ENCODE measurements at regions of chr9 and their contacts with region 1.

Region 1: GRCh38 chr9:75855509-75855908 is 35.0 kb upstream of the PCSK5 start:
- DNase-seq: peak in 1 of 2 donors; percentile 17
- ATAC-seq: peak in 4 of 8 donors; percentile 34 to 65 (median 50)
- H3K4me3 ChIP-seq: no peak overlapping the region
- H3K27ac ChIP-seq: no peak overlapping the region
- H3K4me1 ChIP-seq: peaks cover 0 to 7% (median 0%) of the 10 kb centered on the region in 9 donors
- H3K27me3 ChIP-seq: no peaks in the 10 kb centered on the region
- CTCF ChIP-seq: peak; percentile 31 to 75 (median 60)

Region 2: GRCh38 chr9:75265525-75265972 is 590.0 kb before region 1 on chr9:
- intact Hi-C with region 1: loop called in 8 of 10 experiments (anchors 2 to 10 kb)
- DNase-seq: peak in 1 of 2 donors; percentile 22
- ATAC-seq: peak in 6 of 8 donors; percentile 55 to 79 (median 66)
- H3K4me3 ChIP-seq: no peak overlapping the region
- H3K27ac ChIP-seq: no peak overlapping the region
- H3K4me1 ChIP-seq: no peaks in the 10 kb centered on the region
- H3K27me3 ChIP-seq: no peaks in the 10 kb centered on the region
- CTCF ChIP-seq: peak; percentile 81 to 93 (median 91)

Region 3: GRCh38 chr9:75333624-75334023 is 521.9 kb before region 1 on chr9:
- intact Hi-C with region 1: loop called in 8 of 10 experiments (anchors 5 to 10 kb)
- DNase-seq: no peak
- ATAC-seq: peak in 1 of 8 donors; percentile 49
- H3K4me3 ChIP-seq: no peak overlapping the region
- H3K27ac ChIP-seq: no peak overlapping the region
- H3K4me1 ChIP-seq: no peaks in the 10 kb centered on the region
- H3K27me3 ChIP-seq: no peaks in the 10 kb centered on the region
- CTCF ChIP-seq: peak; percentile 16 to 68 (median 47)

Region 4: GRCh38 chr9:75591972-75592371 is 263.5 kb before region 1 on chr9:
- intact Hi-C with region 1: loop called in 2 of 10 experiments (anchors 5 to 10 kb)
- DNase-seq: no peak
- ATAC-seq: peak in 4 of 8 donors; percentile 22 to 67 (median 38)
- H3K4me3 ChIP-seq: no peak overlapping the region
- H3K27ac ChIP-seq: no peak overlapping the region
- H3K4me1 ChIP-seq: no peaks in the 10 kb centered on the region
- H3K27me3 ChIP-seq: no peaks in the 10 kb centered on the region
- CTCF ChIP-seq: no peak

Region 5: DNA sequence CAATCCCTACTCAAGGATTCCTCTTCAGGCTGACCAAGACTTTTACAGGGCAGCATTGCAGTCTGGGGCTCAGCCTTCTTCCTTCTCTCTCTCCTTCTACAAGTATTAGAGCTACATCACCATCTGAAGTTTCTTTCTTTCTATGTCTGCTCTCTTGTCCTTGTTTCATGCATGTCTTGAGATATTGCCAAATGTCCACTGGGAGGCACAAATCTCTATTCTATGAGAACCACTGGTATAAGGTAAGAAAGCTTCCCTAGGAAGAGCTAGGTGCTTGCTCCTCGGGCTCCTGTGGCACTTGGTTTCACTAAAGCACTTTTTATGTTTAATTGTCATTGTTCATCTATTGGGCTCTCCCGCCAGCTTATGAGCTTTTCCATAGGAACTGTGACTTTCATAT is 254.2 kb before region 1 on chr9:
- intact Hi-C with region 1: loop called in 5 of 10 experiments (anchors 5 to 10 kb)
- DNase-seq: no peak
- ATAC-seq: no peak
- H3K4me3 ChIP-seq: no peak overlapping the region
- H3K27ac ChIP-seq: no peak overlapping the region
- H3K4me1 ChIP-seq: peaks cover 0 to 6% (median 0%) of the 10 kb centered on the region in 9 donors
- H3K27me3 ChIP-seq: no peaks in the 10 kb centered on the region
- CTCF ChIP-seq: peak in 4 of 9 donors; percentile 19 to 43 (median 28)

Region 6: DNA sequence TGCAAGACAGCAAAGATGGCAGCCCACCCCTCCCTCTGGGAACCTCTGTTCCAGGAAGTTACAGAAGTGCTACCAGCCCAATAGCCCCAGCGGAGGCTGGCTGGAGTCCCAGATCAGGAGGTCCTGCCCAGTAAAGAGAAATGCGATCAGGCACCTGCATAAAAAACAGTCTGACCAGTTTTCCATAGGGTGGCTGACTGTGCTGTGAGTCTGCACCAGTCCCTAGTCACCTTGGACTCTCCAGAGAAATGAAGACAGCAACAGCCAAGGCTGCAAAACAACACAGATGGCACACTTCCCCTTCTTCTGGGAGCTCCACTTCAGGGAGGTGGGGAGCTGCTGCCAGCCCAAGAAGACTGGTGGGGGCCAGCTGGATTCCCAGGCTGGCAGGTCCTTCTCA is 230.5 kb before region 1 on chr9:
- intact Hi-C with region 1: loop called in 4 of 10 experiments (anchors 10 kb)
- DNase-seq: no peak
- ATAC-seq: peak in 5 of 8 donors; percentile 11 to 68 (median 17)
- H3K4me3 ChIP-seq: no peak overlapping the region
- H3K27ac ChIP-seq: no peak overlapping the region
- H3K4me1 ChIP-seq: peaks cover 0 to 9% (median 0%) of the 10 kb centered on the region in 9 donors
- H3K27me3 ChIP-seq: no peaks in the 10 kb centered on the region
- CTCF ChIP-seq: no peak

Measured in heart right ventricle (tissue), 16 donors.